ENCODE measurements at regions of chr2 and their contacts with region 1.

Region 1: GRCh38 chr2:172084734-172085459 is 410 bp upstream of the DLX1 start:
- DNase-seq: peak; percentile 80
- ATAC-seq: peak; percentile 84
- H3K4me3 Mint-ChIP-seq: peak overlapping the region; percentile 65
- H3K27ac Mint-ChIP-seq: peak overlapping the region; percentile 70
- H3K4me1 Mint-ChIP-seq: peaks cover 51% of the 10 kb centered on the region
- H3K27me3 Mint-ChIP-seq: peaks cover 98% of the 10 kb centered on the region

Region 2: DNA sequence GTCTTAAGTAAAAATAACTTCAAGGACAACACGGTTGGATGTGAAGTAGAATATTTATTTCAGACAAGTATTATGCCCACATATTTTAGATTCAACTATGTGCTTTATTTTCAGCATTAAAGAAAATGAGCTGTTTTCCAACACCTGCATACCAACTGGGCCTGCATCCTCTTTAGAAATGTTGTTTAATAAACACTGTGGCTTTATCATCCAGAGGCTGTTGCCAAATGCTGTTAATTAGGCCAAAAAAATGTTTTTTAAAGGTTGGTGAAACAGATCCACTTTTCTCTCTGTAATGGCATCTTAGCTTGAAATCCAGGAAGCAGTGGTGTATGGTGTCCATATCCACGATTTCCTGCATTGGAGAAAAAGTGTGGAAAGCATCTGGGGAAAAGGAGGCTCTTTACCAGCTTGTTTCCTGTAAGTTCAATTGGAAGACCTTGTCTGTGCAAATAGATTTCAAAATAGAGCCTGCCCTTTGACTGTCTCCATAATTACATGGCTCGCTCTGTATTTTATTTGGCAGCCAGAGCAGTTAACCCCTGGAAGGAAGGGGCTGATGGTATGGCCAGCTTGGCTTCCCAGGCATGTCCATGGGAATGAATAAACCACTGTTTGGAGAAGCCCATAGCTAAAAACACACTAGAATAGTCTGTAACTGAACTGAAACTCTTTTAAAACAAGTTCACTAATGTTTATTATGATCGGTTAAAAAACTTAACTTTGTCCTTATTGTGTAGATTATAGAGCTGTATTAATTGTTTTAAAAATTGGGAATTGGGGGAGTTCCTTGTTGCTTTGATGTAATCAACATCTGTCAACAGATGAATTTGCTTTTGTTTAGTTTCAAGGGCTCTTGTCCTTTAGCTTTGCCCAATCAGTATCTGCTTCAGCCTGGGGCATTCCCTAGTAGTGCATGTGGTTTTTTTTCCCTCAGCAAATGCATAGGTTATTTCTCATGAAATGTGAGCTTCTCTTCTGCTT is 32.6 kb before region 1 on chr2:
- CTCF ChIA-PET with region 1: no interaction called
- DNase-seq: no peak
- ATAC-seq: no peak
- H3K4me3 Mint-ChIP-seq: no peak overlapping the region
- H3K27ac Mint-ChIP-seq: no peak overlapping the region
- H3K4me1 Mint-ChIP-seq: no peaks in the 10 kb centered on the region
- H3K27me3 Mint-ChIP-seq: no peaks in the 10 kb centered on the region

Region 3: GRCh38 chr2:172095146-172095904 is 10.4 kb after region 1 on chr2:
- CTCF ChIA-PET with region 1: interaction called, 11 read pairs
- DNase-seq: peak; percentile 75
- ATAC-seq: peak; percentile 65
- H3K4me3 Mint-ChIP-seq: peak overlapping the region; percentile 76
- H3K27ac Mint-ChIP-seq: peak overlapping the region; percentile 15
- H3K4me1 Mint-ChIP-seq: peaks cover 30% of the 10 kb centered on the region
- H3K27me3 Mint-ChIP-seq: peaks cover 82% of the 10 kb centered on the region